Vagina (tissue), 2 donors: ENCODE measurements at regions of chr10 and their contacts with region 1.

Region 1: GRCh38 chr10:11201911-11202310 is 184.2 kb downstream of the CELF2 start:
- DNase-seq: no peak
- H3K4me3 ChIP-seq: no peak overlapping the region
- H3K27ac ChIP-seq: no peak overlapping the region
- H3K4me1 ChIP-seq: peaks cover 15% of the 10 kb centered on the region
- H3K27me3 ChIP-seq: no peaks in the 10 kb centered on the region
- CTCF ChIP-seq: no peak
- POLR2A ChIP-seq: no peak

Region 2: GRCh38 chr10:11135709-11136108 is 66.2 kb before region 1 on chr10:
- intact Hi-C with region 1: loop called (anchors 2 kb)
- DNase-seq: no peak
- H3K4me3 ChIP-seq: no peak overlapping the region
- H3K27ac ChIP-seq: no peak overlapping the region
- H3K4me1 ChIP-seq: no peaks in the 10 kb centered on the region
- H3K27me3 ChIP-seq: no peaks in the 10 kb centered on the region
- CTCF ChIP-seq: no peak
- POLR2A ChIP-seq: no peak

Region 3: DNA sequence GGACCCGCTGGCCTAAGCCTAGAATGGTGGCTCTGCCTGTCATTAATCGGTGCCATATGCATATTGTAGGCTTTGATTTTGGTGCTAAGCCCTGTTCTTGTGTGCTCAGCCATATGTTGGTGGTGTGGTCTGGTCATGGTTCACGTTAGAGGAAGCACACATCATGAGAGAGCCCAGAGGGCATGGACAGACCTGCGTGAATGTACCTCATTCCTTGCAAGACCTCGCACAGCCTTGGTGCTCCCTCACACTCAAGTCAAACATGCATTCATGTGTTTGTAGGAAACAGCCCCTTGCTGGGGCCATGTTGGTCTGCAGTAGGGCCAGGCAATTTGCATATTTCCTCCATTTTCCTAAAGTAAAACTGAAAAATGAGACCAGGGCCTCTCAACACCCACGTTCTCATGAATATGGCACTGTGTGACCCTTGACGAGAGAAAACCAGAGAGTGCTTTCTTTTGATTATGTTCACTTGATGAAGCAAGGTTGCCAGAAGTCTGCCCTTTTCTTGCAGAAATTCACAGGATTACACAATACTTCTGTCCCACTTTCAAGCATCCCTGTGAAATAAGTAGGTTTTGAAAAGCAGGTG is 84.4 kb after region 1 on chr10:
- intact Hi-C with region 1: no loop called
- DNase-seq: peak; percentile 9 to 79
- H3K4me3 ChIP-seq: no peak overlapping the region
- H3K27ac ChIP-seq: no peak overlapping the region
- H3K4me1 ChIP-seq: no peaks in the 10 kb centered on the region
- H3K27me3 ChIP-seq: no peaks in the 10 kb centered on the region
- CTCF ChIP-seq: no peak
- POLR2A ChIP-seq: no peak